ENCODE measurements at regions of chr9 and their contacts with region 1.

Region 1: GRCh38 chr9:129648092-129648763 is 6.3 kb upstream of the ASB6 start:
- DNase-seq: no peak
- H3K4me3 ChIP-seq: no peak overlapping the region
- H3K27ac ChIP-seq: peak overlapping the region in 1 of 2 donors; percentile 84
- H3K4me1 ChIP-seq: no peaks in the 10 kb centered on the region
- H3K27me3 ChIP-seq: no peaks in the 10 kb centered on the region
- CTCF ChIP-seq: no peak
- POLR2A ChIP-seq: no peak

Region 2: DNA sequence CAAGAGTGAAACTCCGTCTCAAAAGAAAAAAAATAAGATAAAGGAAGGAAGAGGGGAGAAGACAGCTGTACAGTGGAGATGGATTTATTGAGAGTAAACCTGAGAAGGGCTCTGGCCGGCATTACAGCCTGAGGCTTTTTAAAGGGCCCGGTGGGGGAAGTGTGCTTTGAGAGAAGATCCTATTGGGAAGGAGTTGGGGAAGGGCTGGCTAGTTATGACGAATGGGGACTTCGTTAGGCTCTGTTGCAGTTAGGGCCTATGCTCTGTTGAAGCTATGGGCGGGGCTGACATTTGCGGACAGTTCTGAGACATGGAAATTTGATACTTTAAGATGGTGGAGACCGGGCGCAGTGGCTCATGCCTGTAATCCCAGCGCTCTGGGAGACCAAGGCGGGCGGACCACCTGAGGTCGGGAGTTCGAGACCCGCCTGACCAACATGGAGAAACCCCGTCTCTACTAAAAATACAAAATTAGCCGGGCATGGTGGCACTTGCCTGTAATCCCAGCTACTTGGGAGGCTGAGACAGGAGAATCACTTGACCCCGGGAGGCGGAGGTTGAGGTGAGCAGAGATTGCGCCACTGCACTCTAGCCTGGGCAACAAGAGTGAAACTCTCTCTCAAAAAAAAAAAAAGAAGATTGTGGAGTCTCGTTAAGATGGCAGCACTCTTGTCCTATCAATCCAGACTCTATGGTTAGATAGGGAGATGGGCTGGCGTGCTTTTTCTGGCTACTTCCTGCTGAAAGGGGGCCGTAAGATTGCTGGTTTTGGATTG is 60.6 kb before region 1 on chr9:
- intact Hi-C with region 1: loop called (anchors 2 kb)
- DNase-seq: no peak
- H3K4me3 ChIP-seq: no peak overlapping the region
- H3K27ac ChIP-seq: no peak overlapping the region
- H3K4me1 ChIP-seq: no peaks in the 10 kb centered on the region
- H3K27me3 ChIP-seq: no peaks in the 10 kb centered on the region
- CTCF ChIP-seq: no peak
- POLR2A ChIP-seq: no peak

Measured in breast epithelium (tissue), 4 donors.